ENCODE measurements at regions of chrX and their contacts with region 1.

Region 1: DNA sequence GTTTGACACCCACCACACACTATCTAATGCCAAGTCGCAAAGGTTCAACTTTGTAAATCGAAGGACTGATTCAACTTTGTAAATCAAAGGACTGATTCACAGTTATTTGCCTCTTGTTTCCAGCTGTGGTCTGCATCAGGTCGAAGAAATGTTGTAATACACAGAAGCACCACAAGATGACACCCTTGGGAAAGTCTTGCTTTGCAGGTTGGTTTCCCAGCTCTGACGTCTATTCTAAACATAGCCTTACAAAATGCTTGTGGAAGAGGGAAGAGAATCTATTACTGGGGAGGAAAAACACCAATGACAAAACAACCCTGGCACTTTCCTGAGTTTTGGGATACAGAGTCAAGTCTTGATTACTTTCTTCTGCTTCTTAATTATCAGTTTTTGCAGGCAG is 35.3 kb downstream of the SUPT20HL1 start:
- DNase-seq: peak; percentile 43
- ATAC-seq: peak; percentile 82
- H3K4me3 ChIP-seq: no peak overlapping the region
- H3K27ac ChIP-seq: no peak overlapping the region
- H3K4me1 ChIP-seq: peaks cover 8% of the 10 kb centered on the region
- H3K27me3 ChIP-seq: no peaks in the 10 kb centered on the region
- CTCF ChIP-seq: peak; percentile 81
- EP300 ChIP-seq: no peak
- POLR2A ChIP-seq: no peak
- RAD21 ChIP-seq: peak; percentile 71

Region 2: DNA sequence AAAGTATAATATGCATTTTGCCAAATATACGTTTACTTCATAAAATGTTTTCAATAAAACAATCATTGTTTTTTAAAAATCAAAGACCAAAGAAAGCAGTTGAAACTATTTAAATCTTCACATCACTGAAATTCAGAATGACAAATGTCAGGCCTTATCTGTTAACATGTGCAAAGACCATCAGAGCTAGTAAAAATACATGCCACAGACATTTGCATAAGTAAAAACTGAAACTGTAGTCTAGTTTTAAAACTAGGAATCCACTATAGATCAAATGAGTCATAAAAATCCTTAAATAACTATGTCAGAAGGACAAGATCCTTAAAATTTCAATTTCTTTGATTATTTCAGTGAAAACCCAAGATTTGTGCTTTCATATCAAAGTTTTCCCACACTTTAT is 393.6 kb before region 1 on chrX:
- CTCF ChIA-PET with region 1: no interaction called
- POLR2A ChIA-PET with region 1: no interaction called
- in situ Hi-C with region 1: no loop called
- intact Hi-C with region 1: no loop called
- DNase-seq: no peak
- ATAC-seq: no peak
- H3K4me3 ChIP-seq: no peak overlapping the region
- H3K27ac ChIP-seq: no peak overlapping the region
- H3K4me1 ChIP-seq: no peaks in the 10 kb centered on the region
- H3K27me3 ChIP-seq: no peaks in the 10 kb centered on the region
- CTCF ChIP-seq: no peak
- EP300 ChIP-seq: no peak
- POLR2A ChIP-seq: no peak
- RAD21 ChIP-seq: no peak

Region 3: DNA sequence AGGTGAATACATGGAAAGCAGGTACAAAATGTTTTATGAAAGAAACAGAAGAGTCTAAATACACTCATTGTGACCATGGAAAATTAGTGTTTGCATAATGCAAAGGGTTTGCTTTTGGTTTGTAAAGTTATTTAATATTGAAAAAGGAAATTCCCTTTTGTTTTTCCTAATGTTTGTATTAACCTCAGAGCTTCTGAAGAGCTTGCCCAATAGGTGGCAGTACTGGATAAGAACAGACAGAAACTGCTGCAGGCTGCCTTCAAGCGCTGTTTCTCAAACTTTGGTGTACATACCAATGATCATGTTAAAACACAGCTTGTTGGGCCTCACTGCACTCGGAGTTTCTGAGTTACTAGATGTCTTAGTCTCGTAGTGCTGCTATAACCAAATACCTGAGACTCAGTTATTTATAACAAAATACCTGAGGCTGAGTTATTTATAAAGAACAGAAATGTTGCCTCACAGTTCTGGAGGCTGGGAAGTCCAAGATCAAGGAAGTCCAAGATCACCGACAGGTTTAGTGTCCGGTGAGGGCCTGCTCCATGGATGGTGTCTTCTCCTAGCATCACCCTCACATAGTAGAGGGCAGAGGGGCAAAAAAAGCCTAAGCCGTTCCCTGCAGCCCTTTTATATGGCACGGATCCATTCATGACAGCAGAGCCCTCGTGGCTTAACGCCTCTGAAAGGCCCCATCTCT is 136.1 kb before region 1 on chrX:
- CTCF ChIA-PET with region 1: no interaction called
- POLR2A ChIA-PET with region 1: no interaction called
- in situ Hi-C with region 1: no loop called
- intact Hi-C with region 1: loop called (anchors 10 kb)
- DNase-seq: peak; percentile 56
- ATAC-seq: peak; percentile 73
- H3K4me3 ChIP-seq: no peak overlapping the region
- H3K27ac ChIP-seq: no peak overlapping the region
- H3K4me1 ChIP-seq: peaks cover 10% of the 10 kb centered on the region; the same call in 1 of the 2 replicates
- H3K27me3 ChIP-seq: no peaks in the 10 kb centered on the region
- CTCF ChIP-seq: peak; percentile 65
- EP300 ChIP-seq: no peak
- POLR2A ChIP-seq: no peak
- RAD21 ChIP-seq: peak; percentile 34

Region 4: GRCh38 chrX:24451111-24451510 is 55.3 kb after region 1 on chrX:
- CTCF ChIA-PET with region 1: no interaction called
- POLR2A ChIA-PET with region 1: no interaction called
- in situ Hi-C with region 1: no loop called
- intact Hi-C with region 1: no loop called
- DNase-seq: no peak
- ATAC-seq: no peak
- H3K4me3 ChIP-seq: no peak overlapping the region
- H3K27ac ChIP-seq: no peak overlapping the region
- H3K4me1 ChIP-seq: peaks cover 7% of the 10 kb centered on the region
- H3K27me3 ChIP-seq: no peaks in the 10 kb centered on the region
- CTCF ChIP-seq: no peak
- EP300 ChIP-seq: no peak
- POLR2A ChIP-seq: no peak
- RAD21 ChIP-seq: no peak

Region 5: GRCh38 chrX:24498975-24499374 is 103.2 kb after region 1 on chrX:
- CTCF ChIA-PET with region 1: interaction called, 37 read pairs
- POLR2A ChIA-PET with region 1: no interaction called
- in situ Hi-C with region 1: loop called (anchors 10 kb)
- intact Hi-C with region 1: loop called (anchors 1 kb)
- DNase-seq: no peak
- ATAC-seq: no peak
- H3K4me3 ChIP-seq: no peak overlapping the region
- H3K27ac ChIP-seq: no peak overlapping the region
- H3K4me1 ChIP-seq: peaks cover 16% of the 10 kb centered on the region
- H3K27me3 ChIP-seq: no peaks in the 10 kb centered on the region
- CTCF ChIP-seq: no peak
- EP300 ChIP-seq: no peak
- POLR2A ChIP-seq: no peak
- RAD21 ChIP-seq: no peak